Activated T-helper 2 cell treated with anti-CD3 and anti-CD28 coated beads, Interferon-gamma antibody, Interleukin-2, Interleukin-4, amounts not matched to agents 10 μg/mL and 5 μg/mL and 100 μg/mL, durations not matched to agents 14 hours and 24 hours and 36 hours (primary cell): ENCODE measurements at regions of chr17 and their contacts with region 1.

Region 1: GRCh38 chr17:70144260-70144846 is 25.0 kb upstream of the KCNJ2 start:
- DNase-seq: no peak
- H3K4me3 Mint-ChIP-seq: no peak overlapping the region
- H3K27ac Mint-ChIP-seq: no peak overlapping the region
- H3K4me1 Mint-ChIP-seq: peaks cover 3% of the 10 kb centered on the region
- H3K27me3 Mint-ChIP-seq: peaks cover 8% of the 10 kb centered on the region

Region 2: GRCh38 chr17:69574257-69575197 is 569.8 kb before region 1 on chr17:
- intact Hi-C with region 1: loop called (anchors 1 kb)
- DNase-seq: no peak
- H3K4me3 Mint-ChIP-seq: no peak overlapping the region
- H3K27ac Mint-ChIP-seq: no peak overlapping the region
- H3K4me1 Mint-ChIP-seq: peaks cover 3% of the 10 kb centered on the region
- H3K27me3 Mint-ChIP-seq: peaks cover 14% of the 10 kb centered on the region

Region 3: GRCh38 chr17:69607162-69607834 is 537.1 kb before region 1 on chr17:
- intact Hi-C with region 1: loop called (anchors 2 kb)
- DNase-seq: peak; percentile 26
- H3K4me3 Mint-ChIP-seq: no peak overlapping the region
- H3K27ac Mint-ChIP-seq: peak overlapping the region; percentile 23
- H3K4me1 Mint-ChIP-seq: peaks cover 32% of the 10 kb centered on the region
- H3K27me3 Mint-ChIP-seq: no peaks in the 10 kb centered on the region

Region 4: GRCh38 chr17:69870751-69871199 is 273.6 kb before region 1 on chr17:
- intact Hi-C with region 1: no loop called
- DNase-seq: no peak
- H3K4me3 Mint-ChIP-seq: no peak overlapping the region
- H3K27ac Mint-ChIP-seq: no peak overlapping the region
- H3K4me1 Mint-ChIP-seq: no peaks in the 10 kb centered on the region
- H3K27me3 Mint-ChIP-seq: no peaks in the 10 kb centered on the region

Region 5: DNA sequence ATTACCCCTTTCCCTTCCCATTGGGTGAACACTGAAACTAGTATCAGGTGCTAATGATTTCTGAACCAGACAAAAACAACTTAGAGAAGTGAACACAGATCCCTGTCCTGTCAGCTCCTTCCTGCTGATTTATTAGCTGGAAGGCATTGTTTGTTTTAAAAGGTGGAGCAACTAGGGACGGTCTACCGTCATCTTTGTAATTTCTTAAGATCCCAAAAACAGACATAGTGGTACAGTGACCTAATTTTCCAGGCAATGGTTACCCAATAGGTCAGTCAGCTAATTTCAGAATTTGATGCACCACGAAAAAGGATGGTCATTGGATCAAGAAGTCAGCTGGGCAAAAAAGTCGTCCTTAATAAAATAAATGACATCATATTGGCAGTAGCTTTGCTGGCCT is 96.7 kb before region 1 on chr17:
- intact Hi-C with region 1: no loop called
- DNase-seq: no peak
- H3K4me3 Mint-ChIP-seq: no peak overlapping the region
- H3K27ac Mint-ChIP-seq: no peak overlapping the region
- H3K4me1 Mint-ChIP-seq: no peaks in the 10 kb centered on the region
- H3K27me3 Mint-ChIP-seq: no peaks in the 10 kb centered on the region

Region 6: DNA sequence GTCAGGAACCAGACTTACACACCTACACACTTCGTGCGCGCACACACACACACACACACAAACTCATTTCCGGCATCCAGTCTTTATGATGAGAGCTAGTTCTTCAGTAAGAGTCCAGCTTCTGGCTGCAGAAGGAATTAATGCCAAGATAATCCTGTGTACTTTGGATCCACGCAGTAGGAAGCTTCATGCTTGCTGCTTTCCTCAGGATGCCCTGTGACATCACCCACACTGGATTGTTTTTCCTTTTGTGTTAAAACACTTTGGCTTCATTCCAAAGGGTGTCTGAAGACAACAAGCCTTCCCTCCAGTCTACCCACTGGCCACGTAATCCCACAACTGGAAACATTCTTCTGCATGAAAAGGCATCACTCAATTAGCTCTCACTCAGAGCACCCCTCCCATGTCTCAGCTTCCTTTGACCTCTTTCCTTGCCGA is 33.9 kb before region 1 on chr17:
- intact Hi-C with region 1: no loop called
- DNase-seq: no peak
- H3K4me3 Mint-ChIP-seq: no peak overlapping the region
- H3K27ac Mint-ChIP-seq: no peak overlapping the region
- H3K4me1 Mint-ChIP-seq: peaks cover 3% of the 10 kb centered on the region
- H3K27me3 Mint-ChIP-seq: peaks cover 4% of the 10 kb centered on the region

Region 7: GRCh38 chr17:70169709-70170597 is 25.6 kb after region 1 on chr17:
- intact Hi-C with region 1: no loop called
- DNase-seq: no peak
- H3K4me3 Mint-ChIP-seq: peak overlapping the region; percentile 66
- H3K27ac Mint-ChIP-seq: no peak overlapping the region
- H3K4me1 Mint-ChIP-seq: peaks cover 11% of the 10 kb centered on the region
- H3K27me3 Mint-ChIP-seq: peaks cover 59% of the 10 kb centered on the region